Activated CD8-positive, alpha-beta memory T cell treated with anti-CD3 and anti-CD28 coated beads, Interleukin-2, amount 10 ng/mL, durations not matched to agents 7 days and 5 days (primary cell): ENCODE measurements at regions of chr10 and their contacts with region 1.

Region 1: DNA sequence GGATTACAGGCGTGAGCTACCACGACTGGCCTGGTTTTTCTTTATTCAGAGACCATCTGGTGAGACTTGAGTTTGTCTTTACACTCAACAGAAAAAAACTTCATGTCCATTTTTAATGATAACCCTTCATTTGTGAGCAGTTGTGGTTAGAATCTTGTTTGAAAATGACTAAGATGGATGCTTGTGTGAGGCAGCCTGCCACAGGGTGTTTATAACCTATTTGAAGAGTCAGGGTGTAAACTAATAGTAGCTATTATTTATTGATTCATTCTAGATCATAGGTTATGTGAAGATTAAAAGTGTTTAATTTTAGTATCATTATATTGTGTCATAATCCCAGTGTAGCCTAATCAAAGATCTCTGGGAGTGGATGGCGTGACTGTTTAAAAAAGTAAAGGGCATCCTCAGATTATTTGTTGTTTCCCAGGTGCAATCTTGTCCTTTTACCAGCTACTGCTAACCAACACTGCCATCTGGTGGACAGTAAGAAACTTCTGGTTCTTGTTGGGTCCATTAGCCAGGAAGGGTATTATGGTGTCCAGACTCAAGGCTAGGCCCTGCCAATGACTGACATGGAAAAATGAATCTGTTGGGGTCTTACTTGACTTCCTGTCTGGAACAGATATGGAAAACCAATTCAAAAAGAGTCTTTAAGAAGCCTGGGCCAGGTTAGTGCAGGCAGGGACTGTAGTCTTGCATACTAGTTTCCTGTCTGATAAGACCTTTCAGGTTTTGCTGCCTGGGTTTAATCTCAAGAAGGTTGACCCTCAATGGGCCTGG is 24.9 kb downstream of the NRBF2 start:
- DNase-seq: peak; percentile 70
- ATAC-seq: peak; percentile 82
- H3K4me3 Mint-ChIP-seq: no peak overlapping the region
- H3K27ac Mint-ChIP-seq: peak overlapping the region; percentile 46
- H3K4me1 Mint-ChIP-seq: peaks cover 21% of the 10 kb centered on the region
- H3K27me3 Mint-ChIP-seq: no peaks in the 10 kb centered on the region

Region 2: DNA sequence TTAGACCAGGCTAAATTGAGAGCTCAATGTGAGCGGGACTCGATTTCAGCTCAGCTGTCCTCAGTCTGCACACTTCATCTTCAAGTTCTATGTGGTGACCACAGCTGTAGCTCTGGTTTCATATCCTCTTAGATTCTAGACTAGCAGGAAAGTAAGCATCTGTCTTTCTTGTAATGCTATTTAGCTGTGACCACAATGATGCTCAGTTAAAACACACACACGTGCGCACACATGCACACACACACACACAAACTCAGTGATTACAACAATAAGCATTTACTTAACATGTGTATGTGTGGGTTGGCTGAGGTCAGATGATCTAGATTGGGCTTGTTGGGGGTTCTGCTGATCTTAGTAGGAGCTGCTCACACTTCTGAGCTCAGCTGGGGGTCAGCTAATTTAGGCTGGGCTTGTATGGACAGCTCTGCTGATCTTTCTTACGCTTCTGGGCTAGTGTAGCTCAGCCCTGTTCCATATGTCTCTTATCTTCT is 701.4 kb before region 1 on chr10:
- CTCF ChIA-PET with region 1: no interaction called
- DNase-seq: peak; percentile 45
- ATAC-seq: peak; percentile 67
- H3K4me3 Mint-ChIP-seq: no peak overlapping the region
- H3K27ac Mint-ChIP-seq: no peak overlapping the region
- H3K4me1 Mint-ChIP-seq: peaks cover 21% of the 10 kb centered on the region
- H3K27me3 Mint-ChIP-seq: peaks cover 26% of the 10 kb centered on the region

Region 3: DNA sequence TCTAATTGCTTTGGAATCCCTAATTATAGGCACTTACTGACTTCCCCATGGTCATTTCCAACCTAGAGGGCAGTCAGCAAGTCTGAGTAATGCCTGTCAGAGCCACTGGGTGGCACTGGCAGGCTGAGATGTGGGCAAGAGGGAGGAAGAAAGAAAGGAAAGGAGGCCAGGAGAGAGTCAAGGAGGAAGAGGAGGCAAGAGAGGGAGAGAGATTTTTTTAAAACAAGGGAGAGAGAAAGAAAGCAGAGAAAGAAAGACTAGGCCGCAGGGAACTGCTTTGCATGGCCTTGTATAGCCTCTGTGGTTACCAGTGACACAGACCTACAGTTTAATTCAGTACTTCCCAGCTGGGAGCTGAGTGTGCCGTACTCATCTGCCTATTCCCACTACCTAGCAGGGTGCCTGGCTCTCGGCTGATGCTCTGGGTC is 563.9 kb before region 1 on chr10:
- CTCF ChIA-PET with region 1: interaction called, 25 read pairs
- DNase-seq: peak; percentile 61
- ATAC-seq: peak; percentile 73
- H3K4me3 Mint-ChIP-seq: no peak overlapping the region
- H3K27ac Mint-ChIP-seq: no peak overlapping the region
- H3K4me1 Mint-ChIP-seq: peaks cover 5% of the 10 kb centered on the region
- H3K27me3 Mint-ChIP-seq: peaks cover 29% of the 10 kb centered on the region

Region 4: GRCh38 chr10:63083904-63084689 is 73.9 kb before region 1 on chr10:
- CTCF ChIA-PET with region 1: interaction called, 13 read pairs
- DNase-seq: peak; percentile 53
- ATAC-seq: peak; percentile 66
- H3K4me3 Mint-ChIP-seq: no peak overlapping the region
- H3K27ac Mint-ChIP-seq: no peak overlapping the region
- H3K4me1 Mint-ChIP-seq: no peaks in the 10 kb centered on the region
- H3K27me3 Mint-ChIP-seq: peaks cover 43% of the 10 kb centered on the region

Region 5: DNA sequence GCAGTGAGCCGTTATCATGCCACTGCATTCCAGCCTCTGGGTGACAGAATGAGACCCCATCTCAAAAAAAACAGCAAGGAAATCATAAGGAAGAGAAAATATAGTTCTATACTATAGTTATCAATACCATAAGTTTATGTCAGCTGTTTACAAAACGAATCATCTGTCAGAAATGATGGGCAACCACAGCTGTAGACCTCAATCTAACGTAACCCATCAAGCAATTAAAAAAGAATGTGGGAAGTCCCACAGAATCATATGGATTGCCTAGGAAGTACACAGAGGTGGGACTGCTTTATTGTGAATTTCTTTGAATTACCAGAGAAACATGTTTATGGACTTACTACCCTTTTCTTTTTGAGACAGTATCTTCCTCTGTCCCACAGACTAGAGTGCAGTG is 18.0 kb before region 1 on chr10:
- CTCF ChIA-PET with region 1: interaction called, 31 read pairs
- DNase-seq: no peak
- ATAC-seq: no peak
- H3K4me3 Mint-ChIP-seq: no peak overlapping the region
- H3K27ac Mint-ChIP-seq: no peak overlapping the region
- H3K4me1 Mint-ChIP-seq: peaks cover 49% of the 10 kb centered on the region
- H3K27me3 Mint-ChIP-seq: no peaks in the 10 kb centered on the region

Region 6: GRCh38 chr10:63629363-63630084 is 471.5 kb after region 1 on chr10:
- CTCF ChIA-PET with region 1: interaction called, 18 read pairs
- DNase-seq: peak; percentile 91
- ATAC-seq: peak; percentile 66
- H3K4me3 Mint-ChIP-seq: peak overlapping the region; percentile 89
- H3K27ac Mint-ChIP-seq: peak overlapping the region; percentile 90
- H3K4me1 Mint-ChIP-seq: peaks cover 36% of the 10 kb centered on the region
- H3K27me3 Mint-ChIP-seq: peaks cover 8% of the 10 kb centered on the region